ENCODE measurements at regions of chr12 and their contacts with region 1.

Region 1: GRCh38 chr12:100404769-100405407 is 48.0 kb downstream of the SLC17A8 start:
- DNase-seq: peak; percentile 40
- ATAC-seq: peak; percentile 61
- H3K4me3 ChIP-seq: no peak overlapping the region
- H3K27ac ChIP-seq: no peak overlapping the region
- H3K4me1 ChIP-seq: no peaks in the 10 kb centered on the region
- H3K27me3 ChIP-seq: peaks cover 1% of the 10 kb centered on the region; the same call in 1 of the 2 replicates
- CTCF ChIP-seq: peak; percentile 50
- POLR2A ChIP-seq: no peak
- RAD21 ChIP-seq: peak; percentile 51

Region 2: DNA sequence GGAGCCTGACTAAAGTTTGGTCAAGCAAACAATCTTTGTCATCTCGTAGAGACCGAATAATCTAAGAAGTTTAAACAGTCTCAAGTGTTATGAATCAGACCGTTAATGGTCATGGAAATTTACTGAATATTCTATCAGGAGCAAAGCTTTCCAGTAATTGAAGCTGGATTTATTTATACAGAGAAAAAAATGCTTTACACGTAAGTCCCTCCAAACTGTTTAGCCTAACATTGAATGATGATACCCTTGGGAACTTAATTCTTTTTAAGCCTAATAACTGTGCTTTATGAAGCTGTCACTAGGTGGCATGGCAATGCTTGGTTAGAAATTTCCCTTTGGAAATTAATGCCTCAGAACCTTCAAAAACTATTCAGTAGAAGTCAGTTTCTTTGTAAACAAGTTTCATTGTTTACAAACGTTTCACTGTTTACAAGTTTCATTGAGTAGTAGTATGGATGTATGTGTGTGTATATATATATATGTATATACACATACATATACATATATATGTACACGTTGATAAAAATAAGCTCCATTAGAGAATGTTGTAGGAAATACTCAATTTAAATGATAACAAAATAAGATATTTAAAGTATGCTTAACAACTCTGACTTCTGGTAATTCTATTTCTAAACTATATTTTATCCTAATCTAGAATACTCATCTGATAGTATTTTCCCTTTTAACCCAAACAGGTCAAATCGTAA is 170.1 kb before region 1 on chr12:
- CTCF ChIA-PET with region 1: no interaction called
- POLR2A ChIA-PET with region 1: no interaction called
- dilution Hi-C with region 1: no loop called
- in situ Hi-C with region 1: no loop called
- intact Hi-C with region 1: loop called (anchors 1 kb)
- DNase-seq: peak; percentile 86
- ATAC-seq: peak; percentile 94
- H3K4me3 ChIP-seq: no peak overlapping the region
- H3K27ac ChIP-seq: peak overlapping the region; percentile 46; the same call in 1 of the 2 replicates
- H3K4me1 ChIP-seq: peaks cover 3% of the 10 kb centered on the region
- H3K27me3 ChIP-seq: no peaks in the 10 kb centered on the region
- CTCF ChIP-seq: peak; percentile 91
- POLR2A ChIP-seq: no peak
- RAD21 ChIP-seq: peak; percentile 80

Region 3: GRCh38 chr12:100265732-100266584 is 138.9 kb before region 1 on chr12:
- CTCF ChIA-PET with region 1: no interaction called
- POLR2A ChIA-PET with region 1: no interaction called
- dilution Hi-C with region 1: no loop called
- in situ Hi-C with region 1: no loop called
- intact Hi-C with region 1: no loop called
- DNase-seq: no peak
- ATAC-seq: no peak
- H3K4me3 ChIP-seq: peak overlapping the region; percentile 89; the same call in 1 of the 2 replicates
- H3K27ac ChIP-seq: no peak overlapping the region
- H3K4me1 ChIP-seq: peaks cover 3% of the 10 kb centered on the region
- H3K27me3 ChIP-seq: no peaks in the 10 kb centered on the region
- CTCF ChIP-seq: no peak
- POLR2A ChIP-seq: no peak
- RAD21 ChIP-seq: no peak

Measured in IMR-90 (cell line).